Endothelial cell of umbilical vein (primary cell): ENCODE measurements at regions of chr2 and their contacts with region 1.

Region 1: GRCh38 chr2:207625018-207625907 is at the start of gene METTL21A:
- DNase-seq: peak; percentile 86
- H3K4me3 ChIP-seq: peak within 1 kb of the TSS; percentile 20 to 75 (median 67)
- H3K27ac ChIP-seq: peak within 1 kb of the TSS; percentile 61
- H3K4me1 ChIP-seq: peaks cover 6% of the 10 kb centered on the region
- H3K27me3 ChIP-seq: no peaks in the 10 kb centered on the region
- CTCF ChIP-seq: peak; percentile 39 to 56
- POLR2A ChIP-seq: no peak
- total RNA-seq, gene METTL21A: 12.8 and 14.0 TPM in 2 replicates

Region 2: GRCh38 chr2:207529330-207530159 is 95.7 kb before region 1 on chr2 and contains the start of gene CREB1:
- CTCF ChIA-PET with region 1: interaction called, 19 read pairs
- POLR2A ChIA-PET with region 1: interaction called, 5 read pairs
- dilution Hi-C with region 1: no loop called
- intact Hi-C with region 1: loop called (anchors 1 kb)
- DNase-seq: peak; percentile 99
- H3K4me3 ChIP-seq: peak within 1 kb of the TSS; percentile 79 to 98 (median 91)
- H3K27ac ChIP-seq: peak within 1 kb of the TSS; percentile 95
- H3K4me1 ChIP-seq: peaks cover 28% of the 10 kb centered on the region
- H3K27me3 ChIP-seq: no peaks in the 10 kb centered on the region
- CTCF ChIP-seq: no peak
- POLR2A ChIP-seq: no peak
- total RNA-seq, gene CREB1: 69.3 and 71.1 TPM in 2 replicates

Region 3: GRCh38 chr2:207558106-207558505 is 67.2 kb before region 1 on chr2:
- CTCF ChIA-PET with region 1: no interaction called
- POLR2A ChIA-PET with region 1: no interaction called
- dilution Hi-C with region 1: no loop called
- intact Hi-C with region 1: no loop called
- DNase-seq: no peak
- H3K4me3 ChIP-seq: no peak overlapping the region
- H3K27ac ChIP-seq: no peak overlapping the region
- H3K4me1 ChIP-seq: peaks cover 19% of the 10 kb centered on the region
- H3K27me3 ChIP-seq: no peaks in the 10 kb centered on the region
- CTCF ChIP-seq: no peak
- POLR2A ChIP-seq: no peak

Region 4: GRCh38 chr2:207692206-207693065 is 67.2 kb after region 1 on chr2:
- CTCF ChIA-PET with region 1: interaction called, 34 read pairs
- POLR2A ChIA-PET with region 1: no interaction called
- dilution Hi-C with region 1: no loop called
- intact Hi-C with region 1: loop called (anchors 1 kb)
- DNase-seq: peak; percentile 61
- H3K4me3 ChIP-seq: no peak overlapping the region
- H3K27ac ChIP-seq: no peak overlapping the region
- H3K4me1 ChIP-seq: peaks cover 10% of the 10 kb centered on the region
- H3K27me3 ChIP-seq: no peaks in the 10 kb centered on the region
- CTCF ChIP-seq: peak; percentile 56 to 63
- POLR2A ChIP-seq: no peak

Region 5: DNA sequence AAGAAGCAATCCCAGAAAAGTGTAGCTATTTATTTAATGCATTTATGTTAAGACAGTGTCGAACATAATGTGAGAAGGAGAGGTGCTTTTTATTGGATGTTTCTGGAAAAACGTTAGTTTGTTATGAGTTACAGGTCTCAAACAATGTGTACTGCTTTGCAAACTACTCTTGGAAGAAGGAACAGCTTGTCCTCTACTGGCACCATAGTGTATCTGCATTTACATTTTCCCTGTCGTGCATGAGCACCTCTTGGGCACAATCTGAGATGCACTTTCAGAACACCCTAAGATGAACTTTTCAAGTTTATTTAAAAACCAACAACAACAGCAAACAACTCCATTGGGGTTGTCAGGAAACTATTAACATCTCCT is 109.0 kb after region 1 on chr2:
- CTCF ChIA-PET with region 1: interaction called, 45 read pairs
- POLR2A ChIA-PET with region 1: no interaction called
- dilution Hi-C with region 1: no loop called
- intact Hi-C with region 1: loop called (anchors 1 kb)
- DNase-seq: peak; percentile 54
- H3K4me3 ChIP-seq: no peak overlapping the region
- H3K27ac ChIP-seq: no peak overlapping the region
- H3K4me1 ChIP-seq: no peaks in the 10 kb centered on the region
- H3K27me3 ChIP-seq: no peaks in the 10 kb centered on the region
- CTCF ChIP-seq: peak; percentile 15 to 57
- POLR2A ChIP-seq: no peak

Region 6: DNA sequence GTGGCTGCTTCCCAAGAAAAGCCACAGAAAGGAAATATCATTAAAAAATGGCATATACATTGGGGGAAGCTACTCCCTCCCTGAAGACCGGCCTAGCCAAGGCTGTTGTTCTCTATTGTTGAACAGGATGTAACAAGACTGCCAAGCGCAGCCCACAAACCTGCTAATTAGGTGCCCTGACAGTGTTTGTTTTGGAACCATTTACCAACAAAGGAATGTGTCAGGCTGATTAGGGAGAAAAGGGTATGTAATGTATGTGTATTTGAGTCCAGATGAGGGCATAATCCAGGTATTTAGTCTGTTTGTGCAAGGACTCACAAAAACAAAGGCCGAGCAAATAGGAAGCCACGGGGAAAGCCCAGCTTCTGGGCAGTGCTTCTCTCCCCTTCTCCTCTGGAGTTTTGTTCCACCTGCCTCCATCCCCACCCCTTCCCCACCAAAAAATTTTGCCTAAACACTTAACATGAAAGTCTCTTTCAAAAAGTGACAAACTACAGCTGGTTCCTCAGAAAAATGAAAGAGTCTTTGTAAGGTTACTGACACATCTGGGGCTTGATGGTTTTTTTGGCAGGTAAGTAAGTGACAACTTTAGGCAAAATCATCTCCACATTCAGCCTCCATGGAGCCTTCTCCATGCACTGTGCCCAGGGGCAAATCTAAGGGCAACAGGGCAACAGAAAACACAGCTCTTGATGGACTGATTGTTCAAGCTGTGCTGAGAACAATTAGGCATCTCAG is 222.7 kb after region 1 on chr2:
- CTCF ChIA-PET with region 1: interaction called, 6 read pairs
- POLR2A ChIA-PET with region 1: no interaction called
- dilution Hi-C with region 1: no loop called
- intact Hi-C with region 1: loop called (anchors 2 kb)
- DNase-seq: peak; percentile 97
- H3K4me3 ChIP-seq: no peak overlapping the region
- H3K27ac ChIP-seq: peak overlapping the region; percentile 47
- H3K4me1 ChIP-seq: peaks cover 18% of the 10 kb centered on the region
- H3K27me3 ChIP-seq: no peaks in the 10 kb centered on the region
- CTCF ChIP-seq: no peak
- POLR2A ChIP-seq: peak; percentile 61

Region 7: DNA sequence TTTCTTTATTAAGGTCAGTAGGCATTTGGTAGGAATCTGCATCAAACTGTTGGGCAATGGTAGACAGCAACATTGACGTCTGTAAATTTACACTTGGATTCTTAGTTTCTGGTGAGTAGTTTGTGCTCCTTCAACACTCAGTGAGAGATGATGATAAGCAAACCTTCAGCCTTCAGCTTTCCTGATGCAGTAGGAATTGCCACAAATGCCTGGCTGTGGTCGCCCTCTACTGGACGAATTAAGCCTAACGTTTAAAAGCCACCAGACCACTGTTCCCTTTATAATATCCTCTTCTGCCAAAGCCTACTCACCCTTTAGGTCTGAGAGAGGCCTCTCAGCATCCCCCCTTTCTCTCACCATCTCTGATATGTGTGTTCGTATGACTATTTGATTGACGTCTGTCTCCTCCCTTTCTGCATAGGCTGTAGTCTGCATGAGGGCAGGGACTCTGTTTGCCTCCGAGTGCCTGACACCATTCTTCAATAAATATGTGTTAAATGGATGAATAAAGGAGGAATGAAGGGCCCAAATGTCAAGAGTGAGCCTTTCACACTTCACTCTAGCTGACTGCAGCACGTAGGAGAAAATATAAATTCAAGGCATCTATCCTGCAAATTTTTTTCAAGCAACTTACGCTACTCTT is 447.1 kb after region 1 on chr2:
- CTCF ChIA-PET with region 1: interaction called, 17 read pairs
- POLR2A ChIA-PET with region 1: no interaction called
- dilution Hi-C with region 1: no loop called
- intact Hi-C with region 1: loop called (anchors 1 kb)
- DNase-seq: peak; percentile 77
- H3K4me3 ChIP-seq: no peak overlapping the region
- H3K27ac ChIP-seq: no peak overlapping the region
- H3K4me1 ChIP-seq: no peaks in the 10 kb centered on the region
- H3K27me3 ChIP-seq: peaks cover 3 to 8% of the 10 kb centered on the region in 2 experiments
- CTCF ChIP-seq: peak; percentile 80 to 84
- POLR2A ChIP-seq: no peak